ENCODE measurements at regions of chr2 and their contacts with region 1.

Region 1: GRCh38 chr2:173210270-173211196 is 134.9 kb downstream of the MAP3K20 start:
- DNase-seq: peak; percentile 73
- CTCF ChIP-seq: peak; percentile 75

Region 2: GRCh38 chr2:172762574-172762973 is 448.0 kb before region 1 on chr2:
- in situ Hi-C with region 1: no loop called
- DNase-seq: no peak
- CTCF ChIP-seq: no peak

Region 3: GRCh38 chr2:173027181-173028128 is 183.1 kb before region 1 on chr2:
- in situ Hi-C with region 1: loop called (anchors 5 kb)
- DNase-seq: peak; percentile 74
- CTCF ChIP-seq: peak; percentile 83